CD8-positive, alpha-beta T cell (primary cell): ENCODE measurements at regions of chr18 and their contacts with region 1.

Region 1: GRCh38 chr18:63253428-63254372 is 65.9 kb downstream of the BCL2 start:
- DNase-seq: no peak
- ATAC-seq: no peak
- H3K4me3 ChIP-seq: no peak overlapping the region
- H3K4me3 Mint-ChIP-seq: no peak overlapping the region
- H3K27ac ChIP-seq: no peak overlapping the region
- H3K27ac Mint-ChIP-seq: peak overlapping the region; percentile 50
- H3K4me1 ChIP-seq: peaks cover 36% of the 10 kb centered on the region
- H3K4me1 Mint-ChIP-seq: peaks cover 61% of the 10 kb centered on the region
- H3K27me3 ChIP-seq: no peaks in the 10 kb centered on the region
- H3K27me3 Mint-ChIP-seq: no peaks in the 10 kb centered on the region
- CTCF ChIP-seq: no peak

Region 2: GRCh38 chr18:62399781-62400308 is 853.9 kb before region 1 on chr18:
- CTCF ChIA-PET with region 1: no interaction called
- POLR2A ChIA-PET with region 1: no interaction called
- intact Hi-C with region 1: loop called in 1 of 2 experiments (anchors 5 kb)
- DNase-seq: no peak
- ATAC-seq: no peak
- H3K4me3 ChIP-seq: no peak overlapping the region
- H3K4me3 Mint-ChIP-seq: no peak overlapping the region
- H3K27ac ChIP-seq: no peak overlapping the region
- H3K27ac Mint-ChIP-seq: no peak overlapping the region
- H3K4me1 ChIP-seq: no peaks in the 10 kb centered on the region
- H3K4me1 Mint-ChIP-seq: no peaks in the 10 kb centered on the region
- H3K27me3 ChIP-seq: no peaks in the 10 kb centered on the region
- H3K27me3 Mint-ChIP-seq: peaks cover 5% of the 10 kb centered on the region
- CTCF ChIP-seq: no peak

Region 3: DNA sequence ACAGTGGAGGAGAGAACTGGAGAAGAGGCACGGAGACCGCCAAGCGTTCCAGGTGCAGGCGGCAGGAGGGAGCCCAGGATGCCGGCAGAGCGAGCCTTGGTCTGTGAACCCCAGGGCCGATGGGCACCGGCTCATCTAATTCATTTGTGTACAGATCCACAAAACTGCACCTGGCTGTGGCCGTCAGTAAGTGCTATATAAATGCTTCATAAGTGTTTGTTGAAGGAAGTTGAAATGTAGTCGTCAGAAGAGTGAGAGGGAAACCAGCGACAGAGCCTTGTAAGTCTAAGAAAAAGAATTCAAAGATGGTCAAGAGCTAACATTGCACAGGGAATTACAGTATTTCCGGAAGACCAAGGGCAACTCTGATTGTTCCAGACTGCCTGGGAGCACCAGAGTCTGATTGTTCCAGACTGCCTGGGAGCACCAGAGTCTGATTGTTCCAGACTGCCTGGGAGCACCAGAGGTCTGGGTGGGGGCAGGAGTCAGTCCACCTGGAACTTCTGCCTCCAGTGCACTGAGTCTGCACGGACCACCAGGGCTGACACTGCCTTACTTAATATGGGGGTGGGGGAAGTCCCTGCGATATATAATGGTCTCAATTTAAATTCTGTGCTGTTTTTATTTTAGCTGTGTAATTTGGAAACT is 46.4 kb before region 1 on chr18:
- CTCF ChIA-PET with region 1: no interaction called
- POLR2A ChIA-PET with region 1: no interaction called
- intact Hi-C with region 1: loop called in 1 of 2 experiments (anchors 10 kb)
- DNase-seq: peak in 2 of 9 experiments; percentile 21 to 31
- ATAC-seq: peak; percentile 50
- H3K4me3 ChIP-seq: peak overlapping the region; percentile 13 to 50
- H3K4me3 Mint-ChIP-seq: peak overlapping the region; percentile 79
- H3K27ac ChIP-seq: peak overlapping the region; percentile 36
- H3K27ac Mint-ChIP-seq: peak overlapping the region; percentile 92
- H3K4me1 ChIP-seq: peaks cover 98% of the 10 kb centered on the region
- H3K4me1 Mint-ChIP-seq: peaks cover 93% of the 10 kb centered on the region
- H3K27me3 ChIP-seq: no peaks in the 10 kb centered on the region
- H3K27me3 Mint-ChIP-seq: no peaks in the 10 kb centered on the region
- CTCF ChIP-seq: no peak

Region 4: GRCh38 chr18:63237881-63238667 is 15.6 kb before region 1 on chr18:
- CTCF ChIA-PET with region 1: no interaction called
- POLR2A ChIA-PET with region 1: no interaction called
- intact Hi-C with region 1: loop called in 1 of 2 experiments (anchors 2 kb)
- DNase-seq: no peak
- ATAC-seq: no peak
- H3K4me3 ChIP-seq: no peak overlapping the region
- H3K4me3 Mint-ChIP-seq: no peak overlapping the region
- H3K27ac ChIP-seq: no peak overlapping the region
- H3K27ac Mint-ChIP-seq: no peak overlapping the region
- H3K4me1 ChIP-seq: peaks cover 22% of the 10 kb centered on the region
- H3K4me1 Mint-ChIP-seq: peaks cover 53% of the 10 kb centered on the region
- H3K27me3 ChIP-seq: no peaks in the 10 kb centered on the region
- H3K27me3 Mint-ChIP-seq: no peaks in the 10 kb centered on the region
- CTCF ChIP-seq: no peak

Region 5: DNA sequence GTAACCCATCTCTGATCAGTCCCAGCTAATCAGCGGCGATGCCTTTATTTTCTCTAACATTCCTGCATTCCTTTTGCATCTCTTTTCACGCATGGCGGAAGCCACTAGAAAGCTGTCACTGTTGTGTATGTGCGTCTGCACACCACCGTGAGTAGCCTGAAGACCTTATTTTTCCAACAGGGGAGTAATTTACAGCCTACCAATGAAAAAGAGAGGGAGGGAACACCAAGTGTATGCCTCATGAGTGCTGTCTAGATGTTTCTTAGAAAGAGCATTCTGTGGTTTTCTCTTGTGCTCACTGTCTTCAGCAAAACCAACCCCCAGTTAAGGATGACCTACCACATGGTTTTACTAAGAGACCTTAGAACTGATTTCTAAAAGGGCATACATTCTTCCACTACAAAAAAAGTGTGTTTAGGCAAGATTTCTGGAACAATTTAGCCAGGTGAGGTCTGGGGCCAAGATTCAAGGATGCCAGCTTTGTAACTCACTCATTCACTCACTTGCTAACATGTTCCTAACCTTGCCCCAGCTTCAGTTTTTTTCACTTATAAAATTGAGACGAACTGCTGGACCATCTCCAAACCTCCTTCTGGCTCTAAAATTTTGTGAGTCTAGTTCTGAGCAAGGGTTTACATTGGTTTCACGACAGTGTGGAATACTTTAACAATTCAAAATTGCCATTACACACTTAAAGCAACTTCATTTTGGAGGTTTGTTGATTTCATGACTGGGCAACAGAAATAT is 14.4 kb after region 1 on chr18:
- CTCF ChIA-PET with region 1: interaction called, 4 read pairs
- POLR2A ChIA-PET with region 1: interaction called, 4 read pairs
- intact Hi-C with region 1: loop called in 1 of 2 experiments (anchors 2 kb)
- DNase-seq: peak in 1 of 9 experiments; percentile 22
- ATAC-seq: peak; percentile 78
- H3K4me3 ChIP-seq: no peak overlapping the region
- H3K4me3 Mint-ChIP-seq: peak overlapping the region; percentile 47
- H3K27ac ChIP-seq: peak overlapping the region in 1 of 2 experiments; percentile 22
- H3K27ac Mint-ChIP-seq: peak overlapping the region; percentile 83
- H3K4me1 ChIP-seq: peaks cover 56% of the 10 kb centered on the region
- H3K4me1 Mint-ChIP-seq: peaks cover 71% of the 10 kb centered on the region
- H3K27me3 ChIP-seq: no peaks in the 10 kb centered on the region
- H3K27me3 Mint-ChIP-seq: no peaks in the 10 kb centered on the region
- CTCF ChIP-seq: no peak

Region 6: DNA sequence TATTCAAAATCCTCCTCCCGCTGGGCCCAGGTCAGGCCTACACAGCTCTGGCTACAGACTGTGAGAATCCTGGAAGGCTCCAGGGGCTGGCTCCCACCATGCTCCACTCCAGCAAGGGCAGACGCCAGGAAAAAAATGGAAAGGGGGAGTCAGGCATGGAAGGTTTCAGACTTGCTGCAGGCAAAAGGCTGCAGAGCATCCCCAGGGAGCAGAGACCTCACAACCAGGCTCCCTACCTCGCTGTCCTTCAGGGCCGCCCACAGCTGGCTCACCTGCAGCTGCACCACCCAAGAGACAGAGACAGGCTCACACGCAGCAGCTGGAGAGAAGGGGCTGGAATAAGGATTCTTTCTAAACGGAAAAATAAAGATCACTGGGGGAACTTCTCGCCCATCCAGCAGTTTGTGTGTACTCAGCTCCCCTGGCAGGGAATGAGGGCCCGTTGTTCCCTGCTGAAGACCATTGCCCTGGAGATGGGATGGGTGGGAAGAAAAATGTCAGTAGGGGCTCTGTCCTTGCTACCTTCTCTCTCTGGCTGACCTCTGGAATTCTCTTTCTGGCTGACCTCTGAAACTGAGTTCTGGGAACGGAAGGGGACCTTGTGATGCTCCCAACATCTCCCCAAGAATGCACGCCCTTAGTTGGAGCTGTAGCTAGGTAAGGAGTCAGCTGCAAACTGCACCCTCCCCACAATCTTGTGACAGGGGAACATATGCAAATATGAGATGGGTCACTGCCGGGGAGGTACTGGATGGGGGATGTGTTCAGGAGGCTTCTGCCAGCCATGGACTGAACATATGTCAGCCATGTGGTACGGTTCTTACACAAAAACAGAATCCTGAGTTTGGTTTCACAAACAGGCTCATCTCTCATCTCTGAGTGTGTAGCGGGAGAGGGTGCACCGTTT is 31.4 kb after region 1 on chr18:
- CTCF ChIA-PET with region 1: no interaction called
- POLR2A ChIA-PET with region 1: no interaction called
- intact Hi-C with region 1: no loop called
- DNase-seq: no peak
- ATAC-seq: no peak
- H3K4me3 ChIP-seq: no peak overlapping the region
- H3K4me3 Mint-ChIP-seq: no peak overlapping the region
- H3K27ac ChIP-seq: no peak overlapping the region
- H3K27ac Mint-ChIP-seq: peak overlapping the region; percentile 49
- H3K4me1 ChIP-seq: peaks cover 61% of the 10 kb centered on the region
- H3K4me1 Mint-ChIP-seq: peaks cover 32% of the 10 kb centered on the region
- H3K27me3 ChIP-seq: no peaks in the 10 kb centered on the region
- H3K27me3 Mint-ChIP-seq: no peaks in the 10 kb centered on the region
- CTCF ChIP-seq: no peak

Region 7: GRCh38 chr18:63395503-63395902 is 141.8 kb after region 1 on chr18:
- CTCF ChIA-PET with region 1: no interaction called
- POLR2A ChIA-PET with region 1: no interaction called
- intact Hi-C with region 1: no loop called
- DNase-seq: no peak
- ATAC-seq: no peak
- H3K4me3 ChIP-seq: no peak overlapping the region
- H3K4me3 Mint-ChIP-seq: no peak overlapping the region
- H3K27ac ChIP-seq: no peak overlapping the region
- H3K27ac Mint-ChIP-seq: no peak overlapping the region
- H3K4me1 ChIP-seq: no peaks in the 10 kb centered on the region
- H3K4me1 Mint-ChIP-seq: peaks cover 6% of the 10 kb centered on the region
- H3K27me3 ChIP-seq: no peaks in the 10 kb centered on the region
- H3K27me3 Mint-ChIP-seq: no peaks in the 10 kb centered on the region
- CTCF ChIP-seq: no peak